ENCODE measurements at regions of chr2 and their contacts with region 1.

Region 1: DNA sequence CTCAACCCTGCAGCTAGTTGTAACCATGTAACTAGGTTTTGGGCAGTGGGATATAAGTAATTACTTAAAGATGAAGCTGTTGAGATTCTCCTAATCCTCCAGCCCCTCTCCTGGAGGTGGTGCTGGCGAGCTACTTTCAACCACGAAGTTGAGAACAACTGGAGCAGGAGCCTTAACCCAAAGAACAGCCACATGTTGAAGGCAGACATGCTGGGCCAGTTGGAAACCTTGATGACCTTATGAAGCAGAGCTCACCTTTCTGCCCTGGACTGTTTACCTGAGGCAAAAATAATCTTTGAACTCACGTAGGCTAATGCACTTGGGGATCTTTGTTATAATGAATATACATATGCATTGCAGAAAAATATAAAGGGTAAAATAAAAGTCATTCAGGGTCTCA is 89.6 kb upstream of the NPAS2 start:
- DNase-seq: peak; percentile 77
- ATAC-seq: peak; percentile 86
- H3K4me3 ChIP-seq: no peak overlapping the region
- H3K27ac ChIP-seq: no peak overlapping the region
- H3K4me1 ChIP-seq: peaks cover 12% of the 10 kb centered on the region
- H3K27me3 ChIP-seq: peaks cover 7% of the 10 kb centered on the region
- CTCF ChIP-seq: peak; percentile 93
- POLR2A ChIP-seq: no peak
- RAD21 ChIP-seq: peak; percentile 97

Region 2: GRCh38 chr2:100813527-100813926 is 83.2 kb after region 1 on chr2:
- CTCF ChIA-PET with region 1: interaction called, 3 read pairs
- POLR2A ChIA-PET with region 1: no interaction called
- dilution Hi-C with region 1: no loop called
- in situ Hi-C with region 1: loop called (anchors 5 kb)
- intact Hi-C with region 1: no loop called
- DNase-seq: peak; percentile 42
- ATAC-seq: no peak
- H3K4me3 ChIP-seq: no peak overlapping the region
- H3K27ac ChIP-seq: no peak overlapping the region
- H3K4me1 ChIP-seq: no peaks in the 10 kb centered on the region; the same call in 1 of the 2 replicates
- H3K27me3 ChIP-seq: no peaks in the 10 kb centered on the region; the same call in 1 of the 2 replicates
- CTCF ChIP-seq: no peak
- POLR2A ChIP-seq: no peak
- RAD21 ChIP-seq: no peak

Region 3: GRCh38 chr2:100902833-100903405 is 172.6 kb after region 1 on chr2:
- CTCF ChIA-PET with region 1: no interaction called
- POLR2A ChIA-PET with region 1: no interaction called
- dilution Hi-C with region 1: no loop called
- in situ Hi-C with region 1: no loop called
- intact Hi-C with region 1: loop called (anchors 2 kb)
- DNase-seq: peak; percentile 97
- ATAC-seq: peak; percentile 96
- H3K4me3 ChIP-seq: no peak overlapping the region
- H3K27ac ChIP-seq: peak overlapping the region; percentile 86
- H3K4me1 ChIP-seq: peaks cover 16% of the 10 kb centered on the region
- H3K27me3 ChIP-seq: no peaks in the 10 kb centered on the region
- CTCF ChIP-seq: peak; percentile 27; the same call in 1 of the 2 replicates
- POLR2A ChIP-seq: no peak
- RAD21 ChIP-seq: peak; percentile 48

Region 4: DNA sequence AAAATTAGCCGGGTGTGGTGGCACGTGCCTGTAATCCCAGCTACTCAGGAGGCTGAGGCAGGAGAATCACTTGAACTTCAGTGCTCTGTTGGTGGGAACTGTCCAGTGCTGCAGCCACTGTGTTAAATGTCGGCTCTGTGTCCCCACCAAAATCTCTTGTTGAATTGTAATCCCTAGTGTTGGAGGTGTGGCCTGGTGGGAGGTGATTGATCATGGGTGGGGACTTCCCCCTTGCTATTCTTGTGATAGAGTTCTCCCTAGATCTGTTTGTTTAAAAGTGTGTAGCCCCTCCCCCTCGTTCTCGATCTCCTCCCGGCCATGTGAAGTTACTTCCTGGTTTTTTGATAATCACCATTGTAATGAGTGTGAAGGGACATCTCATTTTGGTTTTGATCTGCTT is 261.9 kb after region 1 on chr2:
- CTCF ChIA-PET with region 1: no interaction called
- POLR2A ChIA-PET with region 1: interaction called, 3 read pairs
- dilution Hi-C with region 1: no loop called
- in situ Hi-C with region 1: loop called (anchors 5 kb)
- intact Hi-C with region 1: no loop called
- DNase-seq: no peak
- ATAC-seq: no peak
- H3K4me3 ChIP-seq: no peak overlapping the region
- H3K27ac ChIP-seq: no peak overlapping the region
- H3K4me1 ChIP-seq: no peaks in the 10 kb centered on the region
- H3K27me3 ChIP-seq: no peaks in the 10 kb centered on the region
- CTCF ChIP-seq: no peak
- POLR2A ChIP-seq: no peak
- RAD21 ChIP-seq: no peak

Region 5: DNA sequence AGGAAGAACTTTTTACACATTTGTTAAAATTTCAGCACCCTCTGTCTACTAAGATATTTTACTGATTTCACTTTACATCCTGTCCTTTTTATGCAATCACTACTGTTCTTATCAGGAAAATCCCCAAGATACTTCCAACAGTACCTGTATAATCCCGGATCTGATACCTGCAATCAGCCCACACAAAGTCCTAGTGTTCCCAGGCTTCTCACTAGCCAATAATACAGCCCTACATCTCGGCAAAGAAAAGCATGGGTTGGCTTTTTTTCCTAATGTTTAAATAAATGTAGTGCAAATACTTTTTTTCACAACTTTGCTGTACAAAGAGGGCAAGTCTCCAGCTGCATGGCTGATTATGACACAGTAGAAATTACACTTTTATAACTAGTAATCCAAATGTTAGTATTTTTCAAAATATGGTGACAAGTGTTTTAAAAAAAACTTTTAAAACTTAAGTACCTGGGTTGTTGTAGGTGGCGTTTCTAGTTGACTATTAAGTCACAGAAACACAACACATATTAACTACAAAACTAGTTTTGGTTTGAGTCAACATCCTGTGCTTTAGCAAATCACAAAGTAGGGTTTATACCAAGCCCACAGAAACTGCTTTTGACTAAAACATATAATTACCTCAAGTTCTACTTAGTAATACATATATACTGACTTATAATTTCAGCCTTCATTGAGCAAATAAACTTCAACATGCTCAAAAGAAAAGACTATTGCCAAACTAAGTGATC is 541.9 kb after region 1 on chr2:
- CTCF ChIA-PET with region 1: no interaction called
- POLR2A ChIA-PET with region 1: no interaction called
- dilution Hi-C with region 1: no loop called
- in situ Hi-C with region 1: no loop called
- intact Hi-C with region 1: no loop called
- DNase-seq: no peak
- ATAC-seq: no peak
- H3K4me3 ChIP-seq: no peak overlapping the region
- H3K27ac ChIP-seq: no peak overlapping the region
- H3K4me1 ChIP-seq: no peaks in the 10 kb centered on the region
- H3K27me3 ChIP-seq: no peaks in the 10 kb centered on the region
- CTCF ChIP-seq: no peak
- POLR2A ChIP-seq: no peak
- RAD21 ChIP-seq: no peak